ENCODE measurements at regions of chr16 and their contacts with region 1.

Region 1: DNA sequence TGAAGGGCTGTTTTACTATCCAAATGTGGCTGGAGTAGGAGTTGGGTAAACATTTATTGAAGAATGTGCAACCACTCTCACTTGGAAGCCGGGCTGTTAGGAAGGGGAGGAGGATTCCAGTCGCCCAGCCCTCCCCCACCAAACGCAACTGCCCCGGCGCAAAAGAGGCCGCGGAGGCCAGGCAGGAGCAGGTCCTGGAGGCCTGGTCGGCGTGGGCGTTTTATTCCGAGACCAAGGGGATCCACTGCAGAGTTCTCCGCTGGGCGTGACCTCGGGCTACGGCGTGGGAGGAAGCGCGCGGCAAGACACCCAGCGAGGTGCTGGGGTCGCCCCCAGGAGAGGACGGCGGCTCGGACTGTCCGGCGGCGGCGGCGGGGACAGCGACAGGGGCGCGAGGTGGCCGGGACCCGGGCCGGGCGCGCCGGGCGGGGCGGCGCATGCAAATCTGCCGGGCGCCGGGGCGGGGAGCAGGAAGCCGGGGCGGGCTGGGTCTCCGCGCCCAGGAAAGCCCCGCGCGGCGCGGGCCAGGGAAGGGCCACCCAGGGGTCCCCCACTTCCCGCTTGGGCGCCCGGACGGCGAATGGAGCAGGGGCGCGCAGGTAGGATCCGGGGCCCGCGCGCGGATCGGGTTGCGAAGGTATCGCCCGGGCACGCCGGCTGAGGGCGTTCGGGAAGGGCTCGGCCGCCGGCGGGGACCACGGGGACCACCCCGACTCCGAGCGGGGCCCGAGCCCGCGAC is at the start of gene IL4R:
- DNase-seq: peak; percentile 69
- H3K4me3 Mint-ChIP-seq: peak within 1 kb of the TSS; percentile 97
- H3K27ac Mint-ChIP-seq: peak within 1 kb of the TSS; percentile 98
- H3K4me1 Mint-ChIP-seq: peaks cover 45% of the 10 kb centered on the region
- H3K27me3 Mint-ChIP-seq: peaks cover 8% of the 10 kb centered on the region
- total RNA-seq, gene IL4R: 257 to 268 TPM

Region 2: DNA sequence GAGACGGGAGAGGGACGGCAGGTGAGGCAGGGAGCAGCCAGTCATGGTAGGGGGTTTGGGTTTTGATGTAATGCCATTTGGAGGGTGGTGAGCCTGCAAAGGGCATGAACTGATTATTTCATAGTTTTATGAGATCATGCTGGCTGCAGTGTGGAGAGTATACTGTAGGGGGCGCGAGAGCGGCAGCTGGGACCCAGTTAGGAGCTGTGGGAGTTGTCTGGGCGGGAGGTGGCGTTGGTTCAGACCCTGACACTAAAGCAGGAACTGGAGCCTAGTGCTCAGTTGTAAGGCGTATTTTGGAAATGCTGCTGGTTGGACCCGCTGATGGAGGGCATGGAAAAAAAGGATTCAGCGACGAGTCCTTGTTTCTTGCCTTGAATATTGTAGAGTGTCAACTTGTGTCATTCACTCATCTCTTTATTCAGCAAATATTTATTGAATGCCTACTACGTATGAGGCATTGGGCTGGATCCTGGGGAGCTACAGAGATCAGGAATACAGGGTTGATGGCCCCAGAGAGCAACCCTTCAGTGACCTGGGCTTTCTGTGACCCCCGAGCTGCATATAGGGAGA is 134.0 kb before region 1 on chr16:
- CTCF ChIA-PET with region 1: interaction called, 22 read pairs
- POLR2A ChIA-PET with region 1: interaction called, 21 read pairs
- DNase-seq: peak; percentile 92
- H3K4me3 Mint-ChIP-seq: no peak overlapping the region
- H3K27ac Mint-ChIP-seq: no peak overlapping the region
- H3K4me1 Mint-ChIP-seq: peaks cover 36% of the 10 kb centered on the region
- H3K27me3 Mint-ChIP-seq: peaks cover 6% of the 10 kb centered on the region

Region 3: DNA sequence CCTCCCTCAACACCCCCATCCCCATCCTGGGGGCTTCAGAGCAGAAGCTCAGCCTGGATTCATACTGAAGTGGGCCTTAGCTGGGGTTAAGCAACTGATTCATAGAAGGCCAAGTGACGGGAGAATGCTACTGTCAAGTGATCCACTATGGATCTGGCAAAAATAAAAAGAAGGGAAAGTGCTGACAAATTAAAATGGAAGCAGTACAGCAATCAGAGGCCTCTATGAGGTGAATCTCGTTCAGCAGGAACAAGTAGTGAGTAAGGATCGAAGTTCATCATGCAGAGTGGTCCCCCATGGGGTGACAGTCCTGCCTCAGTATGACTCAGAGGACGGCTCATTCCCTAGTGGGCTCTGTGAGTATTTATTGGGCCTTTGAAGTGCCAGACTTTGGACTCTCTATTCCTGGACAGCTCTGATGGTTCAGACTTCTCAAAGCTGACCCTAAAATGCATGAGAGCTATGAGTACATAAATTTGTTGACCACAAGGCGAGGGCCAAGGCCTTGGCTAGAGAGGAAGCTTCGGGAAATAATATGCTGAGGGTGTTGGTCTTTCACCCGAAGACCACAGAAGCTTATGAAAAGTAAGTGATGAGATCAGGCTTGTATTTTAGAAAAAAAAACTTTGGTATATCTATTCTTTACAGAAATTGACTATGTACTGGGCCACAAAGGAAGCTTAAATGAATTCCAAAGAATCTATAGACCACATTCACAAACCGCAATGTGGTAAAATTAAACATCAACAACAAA is 39.7 kb before region 1 on chr16:
- CTCF ChIA-PET with region 1: interaction called, 5 read pairs
- POLR2A ChIA-PET with region 1: interaction called, 223 read pairs
- DNase-seq: peak; percentile 29
- H3K4me3 Mint-ChIP-seq: no peak overlapping the region
- H3K27ac Mint-ChIP-seq: peak overlapping the region; percentile 90
- H3K4me1 Mint-ChIP-seq: peaks cover 62% of the 10 kb centered on the region
- H3K27me3 Mint-ChIP-seq: peaks cover 12% of the 10 kb centered on the region

Region 4: GRCh38 chr16:27326738-27327585 is 13.4 kb after region 1 on chr16:
- CTCF ChIA-PET with region 1: interaction called, 3 read pairs
- POLR2A ChIA-PET with region 1: interaction called, 82 read pairs
- DNase-seq: peak; percentile 53
- H3K4me3 Mint-ChIP-seq: peak overlapping the region; percentile 49
- H3K27ac Mint-ChIP-seq: peak overlapping the region; percentile 86
- H3K4me1 Mint-ChIP-seq: peaks cover 88% of the 10 kb centered on the region
- H3K27me3 Mint-ChIP-seq: no peaks in the 10 kb centered on the region

Region 5: GRCh38 chr16:27408012-27408601 is 94.5 kb after region 1 on chr16:
- CTCF ChIA-PET with region 1: interaction called, 4 read pairs
- POLR2A ChIA-PET with region 1: interaction called, 47 read pairs
- DNase-seq: no peak
- H3K4me3 Mint-ChIP-seq: peak overlapping the region; percentile 50
- H3K27ac Mint-ChIP-seq: peak overlapping the region; percentile 87
- H3K4me1 Mint-ChIP-seq: peaks cover 83% of the 10 kb centered on the region
- H3K27me3 Mint-ChIP-seq: no peaks in the 10 kb centered on the region

Region 6: GRCh38 chr16:27475561-27475960 is 162.0 kb after region 1 on chr16:
- CTCF ChIA-PET with region 1: no interaction called
- POLR2A ChIA-PET with region 1: no interaction called
- DNase-seq: no peak
- H3K4me3 Mint-ChIP-seq: no peak overlapping the region
- H3K27ac Mint-ChIP-seq: no peak overlapping the region
- H3K4me1 Mint-ChIP-seq: no peaks in the 10 kb centered on the region
- H3K27me3 Mint-ChIP-seq: no peaks in the 10 kb centered on the region